Dorsolateral prefrontal cortex (tissue), 120 donors: ENCODE measurements at regions of chr1 and their contacts with region 1.

Region 1: DNA sequence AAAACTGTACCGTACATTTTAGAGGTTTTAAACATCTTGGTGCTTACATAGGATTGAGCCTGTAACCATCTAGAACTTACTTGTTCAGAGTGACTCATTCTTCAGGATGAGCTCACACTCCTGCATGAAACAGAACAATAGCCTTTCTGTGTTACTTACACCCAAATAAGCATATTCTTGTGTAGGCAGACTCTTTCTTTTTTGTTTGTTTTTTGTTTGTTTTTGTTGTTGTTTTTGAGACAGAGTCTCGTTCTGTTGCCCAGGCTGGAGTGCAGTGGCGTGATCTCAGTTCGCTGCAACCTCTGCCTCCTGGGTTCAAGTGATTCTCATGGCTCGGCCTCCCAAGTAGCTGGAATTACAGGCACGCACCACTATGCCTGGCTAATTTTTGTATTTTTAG is 3.8 kb upstream of the CA6 start:
- DNase-seq: peak in 1 of 10 donors; percentile 28
- H3K4me3 ChIP-seq: no peak overlapping the region
- H3K27ac ChIP-seq: peak overlapping the region; percentile 63 to 99 (median 93)
- H3K27me3 ChIP-seq: no peaks in the 10 kb centered on the region
- CTCF ChIP-seq: peak in 3 of 56 donors; percentile 3 to 28 (median 14)

Region 2: DNA sequence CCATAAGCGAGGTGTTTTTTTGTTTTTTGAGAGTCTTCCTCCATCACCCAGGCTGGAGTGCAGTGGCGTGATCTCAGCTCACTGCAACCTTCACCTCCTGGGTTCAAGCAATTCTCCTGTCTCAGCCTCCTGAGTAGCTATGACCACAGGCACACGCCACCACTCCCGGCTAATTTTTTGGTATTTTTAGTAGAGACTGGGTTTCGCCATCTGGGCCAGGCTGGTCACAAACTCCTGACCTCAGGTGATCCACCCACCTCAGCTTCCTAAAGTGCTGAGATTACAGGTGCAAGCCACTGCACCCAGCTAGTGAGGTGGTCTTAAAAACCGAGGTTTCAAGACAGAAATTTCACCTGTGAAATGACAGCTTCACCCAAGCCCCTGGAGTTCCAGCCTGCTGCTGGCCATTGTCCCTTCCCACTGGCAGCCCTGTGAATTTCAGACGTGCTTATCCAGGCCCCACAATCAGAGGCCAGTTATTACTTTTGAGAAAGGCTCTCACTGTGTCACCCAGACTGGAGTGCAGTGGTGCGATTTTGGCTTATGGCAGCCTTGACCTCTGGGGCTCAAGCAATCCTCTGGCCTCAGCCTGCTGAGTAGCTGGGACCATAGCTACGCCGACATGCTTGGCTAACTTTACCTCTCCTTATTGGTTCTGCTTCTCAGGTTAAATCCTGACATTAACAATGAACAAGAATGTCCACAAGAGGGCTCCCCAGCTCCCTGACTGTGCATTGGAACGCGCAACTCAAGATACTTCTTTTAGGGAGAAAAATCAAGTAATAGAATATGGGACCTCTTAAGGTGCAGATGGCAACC is 82.8 kb before region 1 on chr1:
- intact Hi-C with region 1: no loop called
- DNase-seq: peak in 4 of 10 donors; percentile 47 to 68 (median 52)
- H3K4me3 ChIP-seq: no peak overlapping the region
- H3K27ac ChIP-seq: peak overlapping the region in 20 of 59 donors; percentile 2 to 68 (median 30)
- H3K27me3 ChIP-seq: no peaks in the 10 kb centered on the region
- CTCF ChIP-seq: peak; percentile 39 to 79 (median 68)

Region 3: GRCh38 chr1:8987881-8988617 is 46.1 kb after region 1 on chr1:
- intact Hi-C with region 1: loop called in 1 of 2 experiments (anchors 5 kb)
- DNase-seq: peak; percentile 28 to 84 (median 74)
- H3K4me3 ChIP-seq: peak overlapping the region in 3 of 59 donors; percentile 1 to 31 (median 8)
- H3K27ac ChIP-seq: peak overlapping the region in 57 of 59 donors; percentile 10 to 96 (median 79)
- H3K27me3 ChIP-seq: no peaks in the 10 kb centered on the region
- CTCF ChIP-seq: peak; percentile 76 to 98 (median 95)